ENCODE measurements at regions of chr6 and their contacts with region 1.

Region 1: DNA sequence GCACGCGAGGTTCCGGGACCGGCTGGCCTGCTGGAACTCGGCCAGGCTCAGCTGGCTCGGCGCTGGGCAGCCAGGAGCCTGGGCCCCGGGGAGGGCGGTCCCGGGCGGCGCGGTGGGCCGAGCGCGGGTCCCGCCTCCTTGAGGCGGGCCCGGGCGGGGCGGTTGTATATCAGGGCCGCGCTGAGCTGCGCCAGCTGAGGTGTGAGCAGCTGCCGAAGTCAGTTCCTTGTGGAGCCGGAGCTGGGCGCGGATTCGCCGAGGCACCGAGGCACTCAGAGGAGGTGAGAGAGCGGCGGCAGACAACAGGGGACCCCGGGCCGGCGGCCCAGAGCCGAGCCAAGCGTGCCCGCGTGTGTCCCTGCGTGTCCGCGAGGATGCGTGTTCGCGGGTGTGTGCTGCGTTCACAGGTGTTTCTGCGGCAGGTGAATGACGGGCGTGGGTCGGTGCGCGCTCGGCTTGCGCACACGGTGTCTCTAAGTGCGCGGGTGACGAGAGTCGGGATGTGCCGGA is at the start of gene CDKN1A:
- DNase-seq: peak; percentile 87
- ATAC-seq: peak; percentile 71
- H3K4me3 Mint-ChIP-seq: peak within 1 kb of the TSS; percentile 97
- H3K27ac Mint-ChIP-seq: peak within 1 kb of the TSS; percentile 98
- H3K4me1 Mint-ChIP-seq: peaks cover 61% of the 10 kb centered on the region
- H3K27me3 Mint-ChIP-seq: no peaks in the 10 kb centered on the region
- total RNA-seq, gene CDKN1A: 67.5 to 109 TPM

Region 2: DNA sequence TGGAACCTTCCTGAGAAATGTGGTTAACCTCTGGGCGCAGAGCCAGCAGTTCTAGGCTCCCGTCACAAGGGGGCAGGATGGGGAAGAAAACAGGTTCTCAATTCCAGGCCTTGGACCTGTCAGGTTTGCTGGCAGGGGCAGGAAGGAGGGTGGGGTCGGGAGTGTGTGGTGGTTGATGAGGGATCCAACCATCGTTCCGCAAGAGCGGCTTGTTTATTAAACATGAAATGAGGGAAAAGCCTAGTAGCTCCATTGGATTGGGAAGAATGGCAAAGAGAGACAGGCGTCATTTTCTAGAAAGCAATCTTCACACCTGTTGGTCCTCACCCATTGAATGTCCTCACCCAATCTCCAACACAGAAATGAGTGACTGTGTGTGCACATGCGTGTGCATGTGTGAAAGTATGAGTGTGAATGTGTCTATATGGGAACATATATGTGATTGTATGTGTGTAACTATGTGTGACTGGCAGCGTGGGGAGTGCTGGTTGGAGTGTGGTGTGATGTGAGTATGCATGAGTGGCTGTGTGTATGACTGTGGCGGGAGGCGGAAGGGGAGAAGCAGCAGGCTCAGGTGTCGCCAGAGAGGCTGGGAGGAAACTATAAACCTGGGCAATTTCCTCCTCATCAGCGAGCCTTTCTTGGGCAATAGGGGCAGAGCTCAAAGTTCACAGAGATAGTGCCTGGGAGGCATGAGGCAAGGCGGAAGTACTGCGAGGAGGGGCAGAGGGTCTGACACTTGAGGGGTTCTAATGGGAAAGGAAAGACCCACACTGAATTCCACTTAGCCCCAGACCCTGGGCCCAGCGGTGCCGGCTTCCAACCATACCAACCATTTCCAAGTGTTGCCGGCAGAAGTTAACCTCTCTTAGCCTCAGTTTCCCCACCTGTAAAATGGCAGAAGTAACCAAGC is 54.8 kb before region 1 on chr6:
- CTCF ChIA-PET with region 1: interaction called, 52 read pairs
- DNase-seq: peak; percentile 84
- ATAC-seq: peak; percentile 75
- H3K4me3 Mint-ChIP-seq: no peak overlapping the region
- H3K27ac Mint-ChIP-seq: peak overlapping the region; percentile 53
- H3K4me1 Mint-ChIP-seq: peaks cover 24% of the 10 kb centered on the region
- H3K27me3 Mint-ChIP-seq: no peaks in the 10 kb centered on the region

Region 3: GRCh38 chr6:36662827-36663362 is 15.7 kb before region 1 on chr6:
- CTCF ChIA-PET with region 1: interaction called, 12 read pairs
- DNase-seq: no peak
- ATAC-seq: no peak
- H3K4me3 Mint-ChIP-seq: no peak overlapping the region
- H3K27ac Mint-ChIP-seq: no peak overlapping the region
- H3K4me1 Mint-ChIP-seq: peaks cover 10% of the 10 kb centered on the region
- H3K27me3 Mint-ChIP-seq: peaks cover 33% of the 10 kb centered on the region